Endothelial cell of umbilical vein (primary cell): ENCODE measurements at regions of chr1 and their contacts with region 1.

Region 1: DNA sequence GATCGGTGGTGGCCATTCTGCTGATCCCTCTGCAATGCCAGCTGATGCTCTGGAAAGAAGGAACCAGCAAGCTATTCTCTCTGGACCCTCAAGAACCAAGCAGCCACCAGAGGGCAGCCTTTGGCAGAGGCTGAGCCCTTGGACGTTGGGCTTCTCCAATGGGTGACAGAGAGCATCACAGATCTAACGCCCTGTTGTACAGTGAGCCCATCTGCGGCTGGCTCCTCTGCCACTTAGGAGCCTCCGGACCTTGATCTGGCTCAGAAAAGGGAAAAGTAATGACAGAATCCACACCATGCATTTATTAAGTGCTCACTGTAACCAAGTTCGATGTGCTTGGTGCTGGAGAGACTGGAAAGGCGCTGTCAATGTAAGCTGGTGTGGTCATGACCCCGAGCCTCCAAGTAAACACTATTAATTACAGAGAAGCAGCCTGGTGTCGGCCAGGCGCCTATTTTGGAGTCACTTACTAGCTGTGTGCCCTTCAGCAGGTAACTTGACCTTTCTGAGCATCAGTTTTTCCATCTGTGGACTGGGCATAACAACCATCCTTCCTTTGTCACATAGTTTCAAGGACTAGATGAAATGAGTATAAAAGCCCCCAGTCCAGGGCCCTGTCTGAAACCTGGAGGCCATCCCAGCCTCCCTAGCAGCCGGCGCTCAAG is 34.9 kb downstream of the ECE1 start:
- DNase-seq: peak; percentile 85
- H3K4me3 ChIP-seq: no peak overlapping the region
- H3K27ac ChIP-seq: no peak overlapping the region
- H3K4me1 ChIP-seq: peaks cover 27% of the 10 kb centered on the region
- H3K27me3 ChIP-seq: no peaks in the 10 kb centered on the region
- CTCF ChIP-seq: peak; percentile 78 to 88
- POLR2A ChIP-seq: no peak

Region 2: GRCh38 chr1:21206117-21206516 is 49.3 kb before region 1 on chr1:
- CTCF ChIA-PET with region 1: no interaction called
- POLR2A ChIA-PET with region 1: no interaction called
- dilution Hi-C with region 1: no loop called
- intact Hi-C with region 1: no loop called
- DNase-seq: no peak
- H3K4me3 ChIP-seq: no peak overlapping the region
- H3K27ac ChIP-seq: no peak overlapping the region
- H3K4me1 ChIP-seq: no peaks in the 10 kb centered on the region
- H3K27me3 ChIP-seq: no peaks in the 10 kb centered on the region
- CTCF ChIP-seq: no peak
- POLR2A ChIP-seq: no peak

Region 3: GRCh38 chr1:21270086-21270689 is 14.8 kb after region 1 on chr1:
- CTCF ChIA-PET with region 1: interaction called, 298 read pairs
- POLR2A ChIA-PET with region 1: interaction called, 3 read pairs
- dilution Hi-C with region 1: no loop called
- intact Hi-C with region 1: loop called (anchors 1 kb)
- DNase-seq: peak; percentile 84
- H3K4me3 ChIP-seq: no peak overlapping the region
- H3K27ac ChIP-seq: no peak overlapping the region
- H3K4me1 ChIP-seq: peaks cover 60% of the 10 kb centered on the region
- H3K27me3 ChIP-seq: no peaks in the 10 kb centered on the region
- CTCF ChIP-seq: peak; percentile 98
- POLR2A ChIP-seq: no peak

Region 4: GRCh38 chr1:21302747-21303715 is 47.6 kb after region 1 on chr1:
- CTCF ChIA-PET with region 1: interaction called, 16 read pairs
- POLR2A ChIA-PET with region 1: no interaction called
- dilution Hi-C with region 1: no loop called
- intact Hi-C with region 1: loop called (anchors 2 kb)
- DNase-seq: peak; percentile 78
- H3K4me3 ChIP-seq: no peak overlapping the region
- H3K27ac ChIP-seq: peak overlapping the region; percentile 90
- H3K4me1 ChIP-seq: peaks cover 46% of the 10 kb centered on the region
- H3K27me3 ChIP-seq: no peaks in the 10 kb centered on the region
- CTCF ChIP-seq: peak; percentile 4 to 19
- POLR2A ChIP-seq: peak; percentile 26

Region 5: DNA sequence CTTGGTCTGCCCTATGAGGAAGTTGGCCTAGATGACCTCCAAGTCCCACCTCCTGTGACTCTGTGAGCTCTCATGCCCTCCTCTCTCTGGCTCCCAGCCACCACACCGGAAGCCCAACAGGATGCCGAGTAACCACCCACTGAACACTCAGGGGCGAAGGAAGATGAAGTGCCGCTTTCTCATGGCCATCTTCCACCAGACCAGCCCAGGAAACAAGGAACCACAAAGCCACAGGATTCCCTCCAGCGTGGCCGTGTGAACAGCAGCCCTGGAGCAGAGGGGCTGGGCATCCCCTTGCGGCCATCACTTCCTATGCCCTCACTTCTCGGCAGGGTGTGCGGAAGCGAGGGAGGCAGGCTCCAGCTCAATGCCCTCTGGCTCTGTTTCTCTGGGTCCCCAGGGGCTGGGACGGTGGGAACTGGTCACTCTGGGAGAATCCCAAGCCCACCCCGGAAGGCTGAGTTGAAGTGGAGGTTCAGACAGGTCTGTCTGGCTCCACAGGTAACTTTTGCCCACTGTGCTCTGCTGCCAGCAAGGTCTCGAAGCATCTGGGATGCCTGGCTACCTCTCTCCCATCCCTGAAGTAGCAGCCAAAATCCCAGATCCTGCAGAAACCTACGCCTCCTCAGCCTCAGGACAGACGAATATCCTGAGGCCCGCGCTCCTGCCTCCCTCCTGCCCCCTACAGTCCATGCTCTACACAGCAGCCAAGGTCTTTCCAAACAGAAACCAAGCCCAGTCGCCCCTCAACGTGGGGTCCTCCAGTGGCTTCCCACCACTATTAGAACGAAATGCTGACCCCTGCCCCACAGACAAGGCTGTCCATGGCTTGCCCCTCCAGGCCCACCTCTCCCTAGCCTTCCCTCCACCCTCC is 79.0 kb after region 1 on chr1:
- CTCF ChIA-PET with region 1: interaction called, 38 read pairs
- POLR2A ChIA-PET with region 1: no interaction called
- dilution Hi-C with region 1: no loop called
- intact Hi-C with region 1: loop called (anchors 1 kb)
- DNase-seq: peak; percentile 75
- H3K4me3 ChIP-seq: peak overlapping the region in 1 of 3 experiments; percentile 10
- H3K27ac ChIP-seq: peak overlapping the region; percentile 81
- H3K4me1 ChIP-seq: peaks cover 73% of the 10 kb centered on the region
- H3K27me3 ChIP-seq: no peaks in the 10 kb centered on the region
- CTCF ChIP-seq: peak; percentile 82 to 89
- POLR2A ChIP-seq: peak; percentile 43

Region 6: DNA sequence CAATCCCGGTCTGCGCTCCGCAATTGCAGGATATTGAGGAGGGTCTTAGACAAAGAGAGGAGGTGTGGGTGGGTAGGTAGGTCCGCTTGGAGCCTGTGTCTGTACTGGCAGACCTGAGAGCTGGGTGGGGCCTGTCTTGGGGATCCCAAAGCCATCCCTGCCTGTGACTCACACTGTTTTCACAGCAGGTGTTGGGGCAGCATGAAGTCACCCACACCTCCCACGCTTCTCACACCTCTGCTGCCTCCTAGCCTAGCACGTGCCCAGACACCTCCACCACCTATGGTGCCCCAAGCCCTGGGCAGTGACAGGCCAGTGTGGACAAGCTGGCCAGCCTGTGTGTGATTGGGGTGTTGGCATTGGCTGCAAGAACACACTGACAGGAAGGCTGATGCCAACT is 100.5 kb after region 1 on chr1:
- CTCF ChIA-PET with region 1: interaction called, 12 read pairs
- POLR2A ChIA-PET with region 1: no interaction called
- dilution Hi-C with region 1: no loop called
- intact Hi-C with region 1: no loop called
- DNase-seq: no peak
- H3K4me3 ChIP-seq: no peak overlapping the region
- H3K27ac ChIP-seq: no peak overlapping the region
- H3K4me1 ChIP-seq: no peaks in the 10 kb centered on the region
- H3K27me3 ChIP-seq: no peaks in the 10 kb centered on the region
- CTCF ChIP-seq: no peak
- POLR2A ChIP-seq: no peak